Endothelial cell of umbilical vein (primary cell): ENCODE measurements at regions of chr9 and their contacts with region 1.

Region 1: GRCh38 chr9:114653556-114654159 is 3.9 kb downstream of the TEX53 start:
- DNase-seq: peak; percentile 76
- H3K4me3 ChIP-seq: no peak overlapping the region
- H3K27ac ChIP-seq: no peak overlapping the region
- H3K4me1 ChIP-seq: no peaks in the 10 kb centered on the region
- H3K27me3 ChIP-seq: peaks cover 0 to 1% of the 10 kb centered on the region in 2 experiments
- CTCF ChIP-seq: peak; percentile 89 to 93
- POLR2A ChIP-seq: no peak

Region 2: DNA sequence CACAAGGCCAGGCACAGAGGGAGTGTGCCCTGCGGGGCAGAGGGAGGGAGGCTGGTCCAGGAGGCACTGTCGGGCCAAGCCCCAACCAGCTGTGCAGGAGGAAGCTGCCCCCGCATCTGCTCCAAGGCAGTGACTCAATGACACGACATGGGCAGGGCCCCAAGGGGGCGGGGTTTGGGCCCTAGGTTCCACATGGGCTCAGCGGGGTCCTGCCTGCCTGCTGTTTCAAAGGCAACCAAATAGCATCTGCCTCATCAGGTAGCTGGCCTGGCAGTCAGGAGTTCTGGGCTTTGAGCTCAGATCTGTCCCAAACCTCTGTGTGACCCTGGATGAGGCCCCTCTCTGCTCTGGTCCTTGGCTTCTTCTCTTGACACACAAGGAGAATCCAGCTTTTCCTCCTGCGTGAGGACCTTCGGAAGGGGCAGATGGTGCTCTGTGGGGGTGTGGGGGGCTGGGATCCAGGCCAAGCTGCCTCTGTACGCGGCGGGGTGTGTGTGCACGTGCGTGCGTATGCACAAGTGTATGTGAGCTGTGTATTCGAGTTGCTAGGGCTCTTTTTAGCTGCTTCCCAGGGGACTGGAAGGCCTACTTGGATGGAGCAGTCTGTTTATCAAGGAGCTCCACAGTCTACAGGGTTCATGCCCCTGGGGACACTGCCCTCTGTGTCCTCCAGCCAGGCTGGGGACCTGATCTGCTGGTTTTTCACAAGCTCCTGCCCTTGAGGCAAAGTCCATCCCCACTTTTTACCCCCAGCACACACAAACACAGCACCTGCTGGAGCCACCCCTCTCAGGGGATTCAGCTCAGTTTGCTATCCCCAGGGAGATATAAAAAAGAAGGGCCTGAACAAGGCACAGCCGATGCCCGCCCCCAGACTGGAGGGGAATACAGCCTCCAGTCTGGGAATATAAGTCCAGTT is 1051.3 kb before region 1 on chr9:
- CTCF ChIA-PET with region 1: no interaction called
- POLR2A ChIA-PET with region 1: no interaction called
- dilution Hi-C with region 1: no loop called
- intact Hi-C with region 1: no loop called
- DNase-seq: peak; percentile 63
- H3K4me3 ChIP-seq: no peak overlapping the region
- H3K27ac ChIP-seq: no peak overlapping the region
- H3K4me1 ChIP-seq: peaks cover 45% of the 10 kb centered on the region
- H3K27me3 ChIP-seq: no peaks in the 10 kb centered on the region
- CTCF ChIP-seq: no peak
- POLR2A ChIP-seq: no peak

Region 3: GRCh38 chr9:113943112-113944009 is 710.3 kb before region 1 on chr9:
- CTCF ChIA-PET with region 1: no interaction called
- POLR2A ChIA-PET with region 1: no interaction called
- dilution Hi-C with region 1: no loop called
- intact Hi-C with region 1: no loop called
- DNase-seq: no peak
- H3K4me3 ChIP-seq: no peak overlapping the region
- H3K27ac ChIP-seq: no peak overlapping the region
- H3K4me1 ChIP-seq: no peaks in the 10 kb centered on the region
- H3K27me3 ChIP-seq: no peaks in the 10 kb centered on the region
- CTCF ChIP-seq: no peak
- POLR2A ChIP-seq: no peak

Region 4: DNA sequence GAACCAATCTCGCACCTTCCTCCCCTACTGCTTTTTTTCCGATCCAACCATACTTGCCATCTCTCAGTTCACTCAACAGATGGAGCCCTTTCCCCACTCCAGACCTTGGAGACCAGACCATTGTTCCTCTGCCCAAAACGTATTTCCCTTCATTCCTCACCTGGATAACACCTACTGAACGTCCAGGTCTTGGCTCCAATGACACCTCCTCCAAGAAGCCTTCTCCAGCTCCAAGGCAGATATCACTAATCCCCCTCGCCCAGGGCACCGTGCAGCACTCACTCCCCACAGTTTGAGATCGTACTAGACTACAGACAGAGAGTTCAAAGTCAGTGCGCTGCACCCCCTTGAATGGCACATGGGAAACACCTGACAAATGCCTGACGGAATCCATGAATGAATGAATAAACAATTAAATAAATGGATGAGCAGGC is 218.8 kb before region 1 on chr9:
- CTCF ChIA-PET with region 1: interaction called, 159 read pairs
- POLR2A ChIA-PET with region 1: no interaction called
- dilution Hi-C with region 1: no loop called
- intact Hi-C with region 1: loop called (anchors 1 kb)
- DNase-seq: peak; percentile 23
- H3K4me3 ChIP-seq: no peak overlapping the region
- H3K27ac ChIP-seq: no peak overlapping the region
- H3K4me1 ChIP-seq: no peaks in the 10 kb centered on the region
- H3K27me3 ChIP-seq: peaks cover 3 to 4% of the 10 kb centered on the region in 2 experiments
- CTCF ChIP-seq: peak; percentile 46 to 60
- POLR2A ChIP-seq: no peak

Region 5: DNA sequence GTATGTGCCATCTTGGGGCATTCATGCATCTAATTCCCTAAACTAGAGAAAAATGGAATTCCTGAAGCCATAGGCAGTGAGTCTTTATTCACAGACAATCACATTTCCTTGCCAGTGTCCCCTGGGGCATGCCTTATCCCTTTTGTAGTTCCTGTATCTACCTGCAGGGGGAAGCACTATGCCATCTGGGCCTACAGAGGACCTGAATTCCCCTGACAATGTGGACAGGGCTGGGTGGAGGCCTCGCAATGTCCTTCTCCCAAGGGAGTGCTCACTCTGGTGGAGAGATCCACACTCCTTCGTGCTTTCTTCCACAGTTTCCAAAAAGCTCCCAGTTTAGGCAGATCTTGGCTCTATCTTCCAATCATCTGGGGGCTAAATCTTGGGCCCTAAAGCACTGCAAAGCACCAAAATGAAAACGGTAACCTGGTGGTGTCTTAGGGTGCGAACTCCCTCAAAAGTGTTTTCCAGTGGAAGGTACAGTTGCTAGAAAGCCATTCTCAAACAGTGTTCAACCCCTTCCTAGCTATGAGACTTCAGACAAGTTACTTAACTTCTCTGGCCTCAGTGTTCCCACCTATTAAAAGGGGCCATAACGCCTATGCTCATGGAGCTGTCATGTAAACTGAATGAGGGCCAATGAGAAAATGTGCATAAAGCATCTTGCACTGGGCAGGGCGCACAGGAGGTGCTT is 165.9 kb before region 1 on chr9:
- CTCF ChIA-PET with region 1: interaction called, 133 read pairs
- POLR2A ChIA-PET with region 1: no interaction called
- dilution Hi-C with region 1: no loop called
- intact Hi-C with region 1: loop called (anchors 1 kb)
- DNase-seq: peak; percentile 70
- H3K4me3 ChIP-seq: no peak overlapping the region
- H3K27ac ChIP-seq: no peak overlapping the region
- H3K4me1 ChIP-seq: no peaks in the 10 kb centered on the region
- H3K27me3 ChIP-seq: peaks cover 2% of the 10 kb centered on the region in 2 experiments
- CTCF ChIP-seq: peak; percentile 80 to 90
- POLR2A ChIP-seq: no peak

Region 6: DNA sequence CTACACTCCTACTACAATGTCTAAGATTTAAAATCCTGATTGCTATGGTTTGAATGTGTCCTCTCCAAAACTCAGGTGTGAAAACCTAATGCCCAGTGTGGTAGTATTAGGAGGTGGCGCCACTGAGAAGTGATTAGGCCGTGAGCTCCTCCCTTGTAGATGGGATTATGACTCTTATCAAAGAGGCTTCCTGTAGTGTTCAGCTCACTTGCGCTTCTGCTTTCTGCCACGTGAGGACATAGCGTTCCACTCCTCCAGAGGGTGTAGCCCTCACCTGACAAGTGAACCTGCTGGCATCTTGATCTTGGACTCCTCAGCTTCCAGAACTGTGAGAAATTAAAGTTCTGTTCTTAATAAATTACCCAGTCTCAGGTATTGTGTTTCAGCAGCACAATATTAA is 115.4 kb before region 1 on chr9:
- CTCF ChIA-PET with region 1: interaction called, 13 read pairs
- POLR2A ChIA-PET with region 1: no interaction called
- dilution Hi-C with region 1: no loop called
- intact Hi-C with region 1: no loop called
- DNase-seq: no peak
- H3K4me3 ChIP-seq: no peak overlapping the region
- H3K27ac ChIP-seq: no peak overlapping the region
- H3K4me1 ChIP-seq: no peaks in the 10 kb centered on the region
- H3K27me3 ChIP-seq: peaks cover 2 to 4% of the 10 kb centered on the region in 2 experiments
- CTCF ChIP-seq: no peak
- POLR2A ChIP-seq: no peak

Region 7: DNA sequence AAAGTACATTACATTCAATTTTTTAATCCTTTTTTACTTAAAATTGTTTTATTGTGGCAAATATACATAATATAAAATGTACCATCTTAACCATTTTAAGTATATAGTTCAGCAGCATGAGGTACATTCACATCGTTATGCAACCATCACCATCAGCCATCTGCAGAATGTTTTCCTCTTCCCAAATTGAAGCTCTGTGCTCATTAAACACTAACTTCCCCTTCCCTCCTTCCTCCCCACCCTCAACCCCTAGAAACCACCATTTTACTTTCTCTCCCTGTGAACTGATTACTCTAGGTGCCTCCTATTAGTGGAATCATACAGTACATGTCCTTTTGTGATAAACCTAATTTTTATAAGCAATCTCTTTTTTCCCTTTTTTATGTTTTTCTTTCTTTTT is 11.7 kb before region 1 on chr9:
- CTCF ChIA-PET with region 1: interaction called, 25 read pairs
- POLR2A ChIA-PET with region 1: no interaction called
- dilution Hi-C with region 1: no loop called
- intact Hi-C with region 1: no loop called
- DNase-seq: no peak
- H3K4me3 ChIP-seq: no peak overlapping the region
- H3K27ac ChIP-seq: no peak overlapping the region
- H3K4me1 ChIP-seq: no peaks in the 10 kb centered on the region
- H3K27me3 ChIP-seq: no peaks in the 10 kb centered on the region
- CTCF ChIP-seq: no peak
- POLR2A ChIP-seq: no peak